HepG2 (cell line): ENCODE measurements at regions of chr13 and their contacts with region 1.

Region 1: GRCh38 chr13:40401911-40402776 is 264.3 kb downstream of the FOXO1 start:
- DNase-seq: peak; percentile 88
- ATAC-seq: peak; percentile 88
- H3K4me3 ChIP-seq: peak overlapping the region; percentile 4 to 53 (median 28); a peak in 4 of 6 replicates
- H3K27ac ChIP-seq: peak overlapping the region; percentile 10
- H3K4me1 ChIP-seq: peaks cover 52% of the 10 kb centered on the region
- H3K27me3 ChIP-seq: no peaks in the 10 kb centered on the region
- CTCF ChIP-seq: no peak
- EP300 ChIP-seq: peak in 1 of 2 experiments; percentile 35; a peak in 1 of 4 replicates
- POLR2A ChIP-seq: no peak
- RAD21 ChIP-seq: no peak

Region 2: GRCh38 chr13:40069173-40070044 is 332.7 kb before region 1 on chr13:
- CTCF ChIA-PET with region 1: no interaction called
- POLR2A ChIA-PET with region 1: interaction called, 3 read pairs
- in situ Hi-C with region 1: no loop called
- intact Hi-C with region 1: loop called (anchors 5 kb)
- DNase-seq: peak; percentile 67
- ATAC-seq: peak; percentile 75
- H3K4me3 ChIP-seq: no peak overlapping the region
- H3K27ac ChIP-seq: no peak overlapping the region
- H3K4me1 ChIP-seq: peaks cover 69% of the 10 kb centered on the region
- H3K27me3 ChIP-seq: no peaks in the 10 kb centered on the region
- CTCF ChIP-seq: peak; percentile 85
- EP300 ChIP-seq: no peak
- POLR2A ChIP-seq: no peak
- RAD21 ChIP-seq: peak; percentile 60; the same call in 1 of the 2 replicates

Region 3: GRCh38 chr13:40344270-40345148 is 57.6 kb before region 1 on chr13:
- CTCF ChIA-PET with region 1: no interaction called
- POLR2A ChIA-PET with region 1: no interaction called
- in situ Hi-C with region 1: no loop called
- intact Hi-C with region 1: loop called (anchors 5 kb)
- DNase-seq: peak; percentile 43
- ATAC-seq: peak; percentile 25
- H3K4me3 ChIP-seq: no peak overlapping the region
- H3K27ac ChIP-seq: peak overlapping the region; percentile 68
- H3K4me1 ChIP-seq: peaks cover 73% of the 10 kb centered on the region
- H3K27me3 ChIP-seq: no peaks in the 10 kb centered on the region
- CTCF ChIP-seq: no peak
- EP300 ChIP-seq: no peak
- POLR2A ChIP-seq: no peak
- RAD21 ChIP-seq: no peak